ENCODE measurements at regions of chr5 and their contacts with region 1.

Region 1: DNA sequence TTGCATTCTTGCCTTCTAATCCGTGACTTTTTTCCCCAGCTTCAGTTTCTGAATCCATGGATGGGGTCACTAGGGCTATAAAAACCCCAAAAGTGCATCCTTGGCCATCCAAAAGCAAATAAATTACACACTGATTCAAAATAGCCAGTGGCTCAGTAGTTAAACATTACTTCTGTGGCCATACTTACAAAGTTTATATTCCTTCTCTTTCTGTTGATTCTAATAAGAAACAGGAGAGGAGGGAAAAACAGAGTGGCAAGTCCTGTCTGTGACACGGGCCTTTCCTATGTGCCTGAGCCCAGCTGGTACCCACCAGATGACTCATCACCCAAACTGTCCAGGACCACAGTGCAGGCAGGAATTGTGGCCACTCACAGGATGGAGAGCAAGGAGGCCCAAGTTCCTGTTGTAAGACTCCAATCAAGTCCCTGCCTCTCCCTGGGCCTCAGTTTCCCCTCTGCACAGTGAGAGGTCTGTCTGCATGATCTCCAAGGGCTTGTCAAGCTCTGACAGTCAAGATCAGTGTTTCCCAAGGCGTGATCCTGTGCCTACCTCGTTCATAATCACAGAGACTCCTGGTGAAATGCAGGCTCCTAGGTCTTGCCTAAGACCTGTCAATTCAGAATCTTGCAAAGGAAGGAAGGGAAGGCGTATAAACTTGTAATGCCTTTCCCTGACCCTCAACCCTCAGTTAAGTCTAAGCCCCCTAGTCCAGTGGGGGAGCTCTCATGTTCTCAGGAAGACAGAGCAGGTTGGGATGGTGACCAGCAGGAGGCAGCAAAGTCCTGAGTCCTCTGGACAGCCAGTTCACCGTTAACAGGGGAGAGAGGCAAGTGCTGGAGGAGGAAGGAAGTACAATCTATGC is 29.5 kb downstream of the TNIP1 start:
- DNase-seq: peak; percentile 81
- CTCF ChIP-seq: peak; percentile 88

Region 2: GRCh38 chr5:150567021-150567717 is 484.1 kb before region 1 on chr5:
- in situ Hi-C with region 1: no loop called
- DNase-seq: no peak
- CTCF ChIP-seq: no peak

Region 3: GRCh38 chr5:151115274-151115905 is 64.1 kb after region 1 on chr5:
- in situ Hi-C with region 1: loop called (anchors 5 kb)
- DNase-seq: peak; percentile 59
- CTCF ChIP-seq: peak; percentile 95

Region 4: DNA sequence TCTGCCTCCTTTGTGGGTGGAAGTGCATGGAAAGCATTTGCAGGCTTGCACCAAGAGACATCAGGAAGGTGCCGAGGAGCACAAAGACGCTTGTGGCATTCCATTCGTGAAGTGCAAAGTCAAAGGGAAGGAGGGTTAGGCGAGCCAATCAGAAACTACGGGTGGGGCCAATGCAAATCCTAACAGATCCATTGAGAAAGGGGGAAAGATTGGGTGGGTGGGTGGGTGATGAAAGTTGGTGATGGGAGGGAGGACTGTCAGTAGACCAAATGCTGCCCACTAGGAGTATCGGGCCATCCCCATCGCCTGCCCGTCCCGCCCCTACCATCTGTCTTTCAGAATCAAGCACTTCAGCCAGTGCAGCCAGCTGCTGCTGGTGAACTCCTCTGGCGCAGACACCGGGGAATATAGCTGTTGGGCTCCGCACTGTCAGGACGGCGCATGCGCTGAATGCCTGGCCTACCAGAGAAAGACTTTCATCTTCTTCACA is 123.4 kb after region 1 on chr5:
- in situ Hi-C with region 1: no loop called
- DNase-seq: no peak
- CTCF ChIP-seq: no peak